ENCODE measurements at regions of chr18 and their contacts with region 1.

Region 1: GRCh38 chr18:46155641-46156051 is 51.5 kb downstream of the HAUS1 start:
- DNase-seq: peak; percentile 84
- ATAC-seq: peak; percentile 86
- H3K4me3 Mint-ChIP-seq: peak overlapping the region; percentile 61
- H3K27ac Mint-ChIP-seq: peak overlapping the region; percentile 99
- H3K4me1 Mint-ChIP-seq: peaks cover 63% of the 10 kb centered on the region
- H3K27me3 Mint-ChIP-seq: no peaks in the 10 kb centered on the region
- CTCF ChIP-seq: no peak

Region 2: DNA sequence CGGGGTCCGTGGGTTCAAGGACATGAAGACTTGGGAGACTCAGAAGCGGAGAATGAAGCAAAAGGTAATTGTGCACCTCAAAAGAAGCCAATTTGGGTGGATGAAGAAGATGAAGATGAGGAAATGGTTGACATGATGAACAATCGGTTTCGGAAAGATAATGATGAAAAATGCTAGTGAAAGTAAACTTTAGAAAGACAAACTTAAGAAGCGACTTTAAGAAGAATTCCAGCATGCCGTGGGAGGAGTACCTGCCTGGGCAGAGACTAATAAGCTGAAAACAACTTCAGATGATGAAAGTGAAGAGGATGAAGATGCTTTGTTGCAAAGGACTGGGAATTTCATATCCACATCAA is 127.1 kb before region 1 on chr18:
- CTCF ChIA-PET with region 1: no interaction called
- POLR2A ChIA-PET with region 1: no interaction called
- intact Hi-C with region 1: no loop called
- DNase-seq: no peak
- ATAC-seq: no peak
- H3K4me3 Mint-ChIP-seq: peak overlapping the region; percentile 74
- H3K27ac Mint-ChIP-seq: peak overlapping the region; percentile 70
- H3K4me1 Mint-ChIP-seq: peaks cover 9% of the 10 kb centered on the region
- H3K27me3 Mint-ChIP-seq: peaks cover 4% of the 10 kb centered on the region
- CTCF ChIP-seq: no peak

Region 3: GRCh38 chr18:46213295-46213694 is 57.6 kb after region 1 on chr18:
- CTCF ChIA-PET with region 1: interaction called, 4 read pairs
- POLR2A ChIA-PET with region 1: interaction called, 3 read pairs
- intact Hi-C with region 1: loop called (anchors 10 kb)
- DNase-seq: no peak
- ATAC-seq: no peak
- H3K4me3 Mint-ChIP-seq: no peak overlapping the region
- H3K27ac Mint-ChIP-seq: peak overlapping the region; percentile 75
- H3K4me1 Mint-ChIP-seq: peaks cover 88% of the 10 kb centered on the region
- H3K27me3 Mint-ChIP-seq: no peaks in the 10 kb centered on the region
- CTCF ChIP-seq: peak; percentile 69

Region 4: DNA sequence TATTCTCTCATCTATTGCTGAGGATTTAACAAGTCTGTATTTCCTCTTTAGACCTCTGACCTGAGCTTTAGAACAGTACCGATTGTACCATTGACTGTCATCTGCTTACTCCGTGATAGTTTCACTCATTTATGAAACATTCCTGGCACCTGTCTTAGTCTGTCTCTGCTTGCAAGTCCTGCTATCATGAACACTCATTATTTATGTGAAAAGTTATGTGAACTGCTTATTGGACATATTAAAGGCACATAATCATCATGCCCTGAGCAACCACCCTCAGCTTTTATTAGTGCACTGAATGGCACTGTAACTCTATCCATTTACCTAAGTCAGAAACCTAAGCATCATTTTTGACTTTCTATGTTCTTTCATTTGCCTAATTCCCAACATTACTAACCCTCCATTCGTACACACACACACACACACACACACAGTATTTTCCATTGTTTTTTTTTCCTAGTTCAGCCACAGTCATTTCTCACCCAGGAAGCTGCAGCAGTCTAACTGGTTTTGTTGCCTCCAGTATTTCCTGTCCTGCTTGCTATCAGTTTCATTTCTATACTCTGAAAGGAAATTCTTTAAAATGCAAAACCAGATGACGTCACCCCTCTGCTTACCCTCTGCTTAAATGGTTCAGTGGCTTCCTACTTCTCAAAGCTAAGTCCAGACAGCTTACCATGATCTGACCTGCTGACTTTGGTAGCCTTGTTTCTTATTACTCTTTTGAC is 94.6 kb after region 1 on chr18:
- CTCF ChIA-PET with region 1: interaction called, 3 read pairs
- POLR2A ChIA-PET with region 1: no interaction called
- intact Hi-C with region 1: loop called (anchors 5 kb)
- DNase-seq: peak; percentile 74
- ATAC-seq: peak; percentile 93
- H3K4me3 Mint-ChIP-seq: peak overlapping the region; percentile 50
- H3K27ac Mint-ChIP-seq: peak overlapping the region; percentile 91
- H3K4me1 Mint-ChIP-seq: peaks cover 68% of the 10 kb centered on the region
- H3K27me3 Mint-ChIP-seq: no peaks in the 10 kb centered on the region
- CTCF ChIP-seq: no peak